ENCODE measurements at regions of chrX and their contacts with region 1.

Region 1: DNA sequence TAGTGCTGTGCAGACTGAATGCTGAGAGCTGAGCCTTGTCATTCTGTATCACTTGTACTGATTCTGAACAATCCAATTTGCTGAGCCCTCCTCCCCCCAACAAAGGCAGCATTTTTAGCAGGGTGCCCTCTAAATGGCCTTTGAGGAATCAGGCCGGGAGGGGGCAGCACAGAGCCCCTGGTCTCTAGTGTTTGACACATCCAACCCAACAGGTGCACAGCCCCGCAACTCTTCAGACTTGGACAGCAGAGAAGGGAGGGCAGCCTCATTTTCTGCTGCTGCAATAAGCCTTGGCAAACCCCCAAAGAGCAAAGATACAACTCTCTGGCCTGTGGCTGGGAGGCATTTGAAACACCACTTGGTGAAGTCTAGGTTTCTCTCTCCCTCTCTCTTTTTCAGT is 3.4 kb downstream of the ATP1B4 start:
- DNase-seq: peak; percentile 76 to 91
- ATAC-seq: peak; percentile 83 to 93 (median 86)
- H3K4me3 ChIP-seq: peak overlapping the region; percentile 56
- H3K27ac ChIP-seq: peak overlapping the region; percentile 71
- H3K4me1 ChIP-seq: peaks cover 26% of the 10 kb centered on the region
- H3K27me3 ChIP-seq: no peaks in the 10 kb centered on the region
- CTCF ChIP-seq: peak; percentile 53

Region 2: DNA sequence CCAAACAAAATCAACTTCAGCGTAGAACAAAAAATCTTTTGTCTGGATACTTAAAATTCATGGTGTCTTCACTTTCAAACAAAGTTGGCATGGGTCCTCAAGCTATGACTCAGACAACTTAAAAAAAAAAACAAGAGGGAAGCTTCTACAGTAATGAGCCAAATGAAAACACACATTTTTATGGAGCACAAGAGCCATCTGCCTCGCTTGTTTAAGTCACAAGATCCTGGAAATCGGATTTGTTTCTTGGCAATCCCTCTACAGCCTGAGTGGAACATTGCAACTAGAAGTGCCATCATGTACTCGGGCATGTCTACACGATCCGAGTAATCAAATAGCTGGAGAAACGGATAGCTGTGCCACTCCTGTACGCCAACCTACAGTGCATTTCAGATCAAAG is 81.2 kb after region 1 on chrX:
- intact Hi-C with region 1: loop called (anchors 5 kb)
- DNase-seq: no peak
- ATAC-seq: peak; percentile 56 to 86 (median 65)
- H3K4me3 ChIP-seq: no peak overlapping the region
- H3K27ac ChIP-seq: peak overlapping the region; percentile 46
- H3K4me1 ChIP-seq: no peaks in the 10 kb centered on the region
- H3K27me3 ChIP-seq: no peaks in the 10 kb centered on the region
- CTCF ChIP-seq: no peak

Region 3: GRCh38 chrX:120452131-120452530 is 86.8 kb after region 1 on chrX:
- intact Hi-C with region 1: loop called (anchors 5 kb)
- DNase-seq: no peak
- ATAC-seq: peak; percentile 44 to 71 (median 58)
- H3K4me3 ChIP-seq: no peak overlapping the region
- H3K27ac ChIP-seq: peak overlapping the region; percentile 56
- H3K4me1 ChIP-seq: peaks cover 4% of the 10 kb centered on the region
- H3K27me3 ChIP-seq: no peaks in the 10 kb centered on the region
- CTCF ChIP-seq: peak; percentile 39

Measured in psoas muscle (tissue), 8 donors.